ENCODE measurements at regions of chr17 and their contacts with region 1.

Region 1: GRCh38 chr17:53454337-53454736 is 368.4 kb upstream of the KIF2B start:
- DNase-seq: no peak
- H3K4me3 ChIP-seq: no peak overlapping the region
- H3K27ac ChIP-seq: no peak overlapping the region
- H3K4me1 ChIP-seq: no peaks in the 10 kb centered on the region
- H3K27me3 ChIP-seq: no peaks in the 10 kb centered on the region
- CTCF ChIP-seq: no peak
- POLR2A ChIP-seq: no peak

Region 2: GRCh38 chr17:53499277-53499676 is 44.9 kb after region 1 on chr17:
- intact Hi-C with region 1: loop called (anchors 10 kb)
- DNase-seq: no peak
- H3K4me3 ChIP-seq: no peak overlapping the region
- H3K27ac ChIP-seq: no peak overlapping the region
- H3K4me1 ChIP-seq: no peaks in the 10 kb centered on the region
- H3K27me3 ChIP-seq: no peaks in the 10 kb centered on the region
- CTCF ChIP-seq: no peak
- POLR2A ChIP-seq: no peak